PC-9 (cell line): ENCODE measurements at regions of chr15 and their contacts with region 1.

Region 1: DNA sequence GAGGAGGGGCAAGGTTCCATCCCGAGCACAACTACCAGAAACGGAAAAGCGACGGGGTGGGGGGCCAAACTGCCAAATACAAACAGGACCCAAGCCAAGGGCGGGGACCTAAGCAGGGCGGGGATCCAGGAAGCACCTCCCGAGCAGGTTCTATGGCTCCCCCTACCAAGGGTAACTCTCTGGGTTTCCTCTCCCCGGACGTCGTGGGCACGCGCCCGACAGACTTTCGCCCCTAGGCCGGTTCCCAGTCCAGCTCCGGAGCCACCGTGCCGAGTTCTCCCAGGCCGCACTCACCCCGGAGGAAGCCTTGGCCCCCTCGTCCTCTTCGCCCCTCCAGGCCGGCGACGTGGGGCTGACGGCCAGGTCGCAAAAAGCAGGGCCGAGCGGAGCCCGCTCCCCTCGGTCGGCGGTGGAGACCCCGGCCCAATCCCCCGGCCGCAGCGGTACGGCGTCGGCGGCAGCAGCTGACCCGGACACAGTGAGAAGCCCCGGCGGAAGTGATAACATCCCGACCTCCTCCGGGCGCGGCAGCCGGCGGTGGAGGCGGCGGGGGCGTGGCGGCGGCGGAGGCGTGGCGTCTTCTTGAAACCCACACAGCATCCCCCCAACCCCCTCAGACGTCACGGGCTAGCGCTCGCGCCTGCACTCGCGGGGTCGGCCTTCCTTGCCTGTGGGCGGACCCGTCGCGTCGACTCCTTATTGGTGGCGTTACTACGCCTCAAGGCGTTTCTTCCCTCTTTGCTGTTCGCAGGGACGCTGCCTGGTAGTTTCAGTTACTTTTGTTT is at the start of gene BNIP2:
- DNase-seq: peak; percentile 90 to 98
- H3K4me3 ChIP-seq: peak within 1 kb of the TSS; percentile 73
- H3K27ac ChIP-seq: peak within 1 kb of the TSS; percentile 95
- H3K4me1 ChIP-seq: peaks cover 15% of the 10 kb centered on the region
- H3K27me3 ChIP-seq: no peaks in the 10 kb centered on the region
- CTCF ChIP-seq: no peak
- total RNA-seq, gene BNIP2: 59.5 and 64.3 TPM in 2 replicates

Region 2: GRCh38 chr15:58139276-58139988 is 1549.6 kb before region 1 on chr15:
- CTCF ChIA-PET with region 1: no interaction called
- POLR2A ChIA-PET with region 1: no interaction called
- intact Hi-C with region 1: no loop called
- DNase-seq: no peak
- H3K4me3 ChIP-seq: no peak overlapping the region
- H3K27ac ChIP-seq: no peak overlapping the region
- H3K4me1 ChIP-seq: no peaks in the 10 kb centered on the region
- H3K27me3 ChIP-seq: no peaks in the 10 kb centered on the region
- CTCF ChIP-seq: no peak

Region 3: DNA sequence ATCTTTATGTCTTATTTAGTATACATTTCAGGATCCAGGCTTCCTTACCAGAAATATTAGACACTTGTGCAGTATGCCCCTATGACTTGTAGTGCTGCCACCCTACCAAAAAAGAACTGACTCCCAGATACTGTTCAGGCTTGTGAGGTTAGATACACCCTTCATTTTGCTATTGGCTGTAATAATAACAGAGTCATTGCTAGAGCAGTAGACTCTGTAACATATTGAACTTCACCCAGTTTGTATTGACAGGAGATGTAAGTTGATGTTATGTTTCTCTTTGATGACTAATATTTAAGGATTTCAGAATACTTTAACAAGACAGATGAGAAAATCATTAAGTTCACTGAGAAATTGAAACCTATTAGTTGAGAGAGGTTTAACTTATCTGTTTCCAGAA is 668.7 kb before region 1 on chr15:
- CTCF ChIA-PET with region 1: no interaction called
- POLR2A ChIA-PET with region 1: interaction called, 12 read pairs
- intact Hi-C with region 1: no loop called
- DNase-seq: no peak
- H3K4me3 ChIP-seq: no peak overlapping the region
- H3K27ac ChIP-seq: no peak overlapping the region
- H3K4me1 ChIP-seq: no peaks in the 10 kb centered on the region
- H3K27me3 ChIP-seq: no peaks in the 10 kb centered on the region
- CTCF ChIP-seq: no peak

Region 4: GRCh38 chr15:59656897-59657634 is 32.0 kb before region 1 on chr15 and contains the start of gene GTF2A2:
- CTCF ChIA-PET with region 1: no interaction called
- POLR2A ChIA-PET with region 1: no interaction called
- intact Hi-C with region 1: no loop called
- DNase-seq: peak; percentile 84 to 93
- H3K4me3 ChIP-seq: peak within 1 kb of the TSS; percentile 96
- H3K27ac ChIP-seq: peak within 1 kb of the TSS; percentile 37
- H3K4me1 ChIP-seq: peaks cover 14% of the 10 kb centered on the region
- H3K27me3 ChIP-seq: no peaks in the 10 kb centered on the region
- CTCF ChIP-seq: no peak
- total RNA-seq, gene GTF2A2: 80.8 and 111 TPM in 2 replicates

Region 5: DNA sequence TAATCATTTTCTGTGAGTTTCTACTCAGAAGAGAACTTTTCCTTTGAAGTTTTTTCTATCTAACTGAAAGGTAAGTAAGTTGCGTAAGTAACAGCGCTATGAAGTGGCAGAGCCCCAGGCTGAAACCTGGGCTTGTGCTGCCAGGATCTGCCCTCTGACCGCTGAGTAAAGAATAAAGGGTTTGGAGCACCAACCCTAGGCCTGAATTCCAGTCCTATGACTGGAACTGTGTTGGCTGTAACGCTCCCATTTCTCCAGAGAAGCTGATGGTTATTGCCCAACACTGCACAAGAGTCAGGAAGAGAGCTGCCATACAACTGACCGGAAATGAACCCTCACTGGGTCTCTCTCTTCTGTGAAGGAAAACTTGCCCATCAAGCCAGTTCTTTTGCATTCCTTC is 402.1 kb after region 1 on chr15:
- CTCF ChIA-PET with region 1: no interaction called
- POLR2A ChIA-PET with region 1: no interaction called
- intact Hi-C with region 1: loop called (anchors 1 kb)
- DNase-seq: peak; percentile 87 to 98
- H3K4me3 ChIP-seq: no peak overlapping the region
- H3K27ac ChIP-seq: peak overlapping the region; percentile 96
- H3K4me1 ChIP-seq: peaks cover 69% of the 10 kb centered on the region
- H3K27me3 ChIP-seq: no peaks in the 10 kb centered on the region
- CTCF ChIP-seq: no peak

Region 6: GRCh38 chr15:60496853-60497252 is 807.8 kb after region 1 on chr15:
- CTCF ChIA-PET with region 1: no interaction called
- POLR2A ChIA-PET with region 1: interaction called, 10 read pairs
- intact Hi-C with region 1: no loop called
- DNase-seq: no peak
- H3K4me3 ChIP-seq: no peak overlapping the region
- H3K27ac ChIP-seq: no peak overlapping the region
- H3K4me1 ChIP-seq: no peaks in the 10 kb centered on the region
- H3K27me3 ChIP-seq: no peaks in the 10 kb centered on the region
- CTCF ChIP-seq: no peak

Region 7: DNA sequence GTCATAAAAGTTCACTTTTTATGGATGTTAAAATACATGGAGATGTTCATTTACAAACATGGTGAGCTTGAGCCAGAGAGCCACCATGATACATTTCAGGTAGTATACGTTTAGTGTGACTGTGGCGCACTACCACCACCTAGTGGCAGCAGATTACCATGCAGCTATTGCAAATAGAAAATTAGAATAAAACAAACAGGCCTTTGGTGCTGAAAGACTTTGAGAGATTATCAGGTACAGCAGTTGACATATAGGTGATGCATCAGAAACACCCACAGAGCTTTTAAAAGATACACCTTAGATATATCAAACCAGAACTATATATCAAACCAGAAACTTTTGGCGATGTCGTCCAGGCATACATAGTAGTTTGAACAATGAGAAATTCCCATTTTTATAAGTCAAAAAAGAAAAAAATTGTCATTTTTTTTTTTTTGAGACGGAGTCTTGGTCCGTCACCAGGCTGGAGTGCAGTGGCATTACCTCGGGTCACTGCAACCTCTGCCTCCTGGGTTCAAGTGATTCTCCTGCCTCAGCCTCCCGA is 831.9 kb after region 1 on chr15:
- CTCF ChIA-PET with region 1: interaction called, 6 read pairs
- POLR2A ChIA-PET with region 1: interaction called, 8 read pairs
- intact Hi-C with region 1: loop called (anchors 1 kb)
- DNase-seq: peak; percentile 36 to 68
- H3K4me3 ChIP-seq: no peak overlapping the region
- H3K27ac ChIP-seq: peak overlapping the region; percentile 92
- H3K4me1 ChIP-seq: peaks cover 33% of the 10 kb centered on the region
- H3K27me3 ChIP-seq: no peaks in the 10 kb centered on the region
- CTCF ChIP-seq: peak; percentile 88